ENCODE measurements at regions of chr11 and their contacts with region 1.

Region 1: DNA sequence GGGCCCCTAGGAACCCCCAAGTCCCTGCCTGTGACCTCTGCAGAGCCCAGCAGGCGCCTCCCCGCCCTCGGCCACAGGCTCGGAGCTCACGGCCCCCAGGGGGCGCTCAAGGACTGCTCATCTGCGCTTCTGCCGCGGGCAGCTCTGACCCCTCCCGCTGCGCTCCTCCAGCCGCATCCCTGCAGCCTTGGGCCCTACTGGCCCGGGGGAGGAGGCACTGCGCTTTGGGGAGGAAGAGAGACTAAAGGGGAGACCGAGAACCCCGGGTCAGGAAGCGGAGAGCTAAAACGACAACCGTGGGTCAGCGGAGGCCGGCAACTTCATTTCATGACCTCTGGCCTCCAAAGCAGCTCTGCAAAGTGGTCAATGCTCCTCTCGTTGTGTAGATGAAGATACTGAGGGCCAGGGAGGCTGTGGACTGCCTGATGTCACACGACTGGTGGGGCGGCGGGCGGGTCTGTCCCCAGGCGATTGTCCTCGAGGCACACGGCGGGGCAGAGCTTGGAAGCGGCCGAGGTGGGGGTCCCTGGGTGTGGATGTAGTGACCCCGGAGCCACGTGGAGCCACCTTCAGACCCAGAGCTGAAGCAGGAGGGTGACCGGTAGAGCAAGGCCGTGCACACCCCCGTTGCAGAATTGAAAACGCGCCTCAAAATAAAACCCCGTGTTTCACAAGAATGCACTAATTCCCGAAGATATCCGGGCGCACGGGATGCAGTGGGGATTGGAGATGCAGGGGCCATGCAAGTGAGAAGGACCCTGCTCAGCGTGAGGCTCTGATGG is 2.7 kb upstream of the KRTAP5-6 start:
- DNase-seq: peak; percentile 95
- ATAC-seq: peak; percentile 98

Region 2: DNA sequence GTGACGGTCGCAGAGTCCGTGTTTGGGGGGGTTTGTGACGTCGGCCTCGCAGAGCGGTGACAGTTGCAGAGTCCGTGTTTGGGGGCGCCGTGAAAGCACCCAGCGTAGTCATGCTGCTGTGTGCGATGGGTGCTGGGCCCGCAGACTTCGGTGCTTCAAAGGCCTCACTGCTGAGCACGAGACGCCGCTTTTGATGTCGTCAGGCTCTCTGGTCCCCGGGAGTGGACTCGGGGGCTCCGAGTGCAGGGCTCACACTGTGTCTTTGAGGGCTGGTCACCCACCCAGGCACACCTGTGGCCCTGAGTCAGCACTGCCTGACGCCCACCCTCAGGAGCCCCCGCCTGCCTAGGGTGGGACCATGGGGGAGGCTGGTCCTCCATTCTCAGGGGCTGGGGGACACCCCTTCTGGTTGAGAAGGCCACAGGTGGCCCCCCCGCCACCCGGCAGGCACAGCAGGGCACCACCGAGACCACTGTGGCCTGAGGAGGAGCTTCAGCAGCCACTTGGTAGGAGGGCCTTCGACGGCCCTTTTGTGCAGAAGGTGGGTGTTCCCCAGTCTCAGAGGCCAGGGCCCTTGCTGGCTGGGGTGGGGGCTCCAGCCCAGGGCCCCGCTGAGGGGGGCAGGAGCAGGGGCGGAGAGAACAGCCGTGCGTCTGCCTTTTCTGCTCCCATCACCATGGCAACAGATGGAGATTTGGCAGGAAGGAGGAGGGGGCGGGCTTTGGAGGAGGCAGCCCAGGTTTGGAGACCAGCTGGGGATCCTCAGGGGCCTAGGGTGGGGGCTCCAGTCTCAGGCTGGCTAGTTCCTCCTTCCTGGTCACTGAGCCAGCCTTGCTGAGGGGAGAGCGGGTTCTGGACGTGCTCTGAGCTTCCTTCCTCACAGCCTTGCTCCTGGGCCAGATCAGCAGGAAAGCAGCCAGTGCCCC is 283.6 kb before region 1 on chr11:
- intact Hi-C with region 1: no loop called
- DNase-seq: no peak
- ATAC-seq: no peak

Region 3: GRCh38 chr11:1832211-1832919 is 138.1 kb after region 1 on chr11:
- intact Hi-C with region 1: loop called (anchors 2 kb)
- DNase-seq: peak; percentile 83
- ATAC-seq: peak; percentile 85

Region 4: GRCh38 chr11:2142762-2143202 is 448.5 kb after region 1 on chr11:
- intact Hi-C with region 1: loop called (anchors 5 kb)
- DNase-seq: no peak
- ATAC-seq: no peak